Left cardiac atrium (tissue), 4 donors: ENCODE measurements at regions of chr2 and their contacts with region 1.

Region 1: DNA sequence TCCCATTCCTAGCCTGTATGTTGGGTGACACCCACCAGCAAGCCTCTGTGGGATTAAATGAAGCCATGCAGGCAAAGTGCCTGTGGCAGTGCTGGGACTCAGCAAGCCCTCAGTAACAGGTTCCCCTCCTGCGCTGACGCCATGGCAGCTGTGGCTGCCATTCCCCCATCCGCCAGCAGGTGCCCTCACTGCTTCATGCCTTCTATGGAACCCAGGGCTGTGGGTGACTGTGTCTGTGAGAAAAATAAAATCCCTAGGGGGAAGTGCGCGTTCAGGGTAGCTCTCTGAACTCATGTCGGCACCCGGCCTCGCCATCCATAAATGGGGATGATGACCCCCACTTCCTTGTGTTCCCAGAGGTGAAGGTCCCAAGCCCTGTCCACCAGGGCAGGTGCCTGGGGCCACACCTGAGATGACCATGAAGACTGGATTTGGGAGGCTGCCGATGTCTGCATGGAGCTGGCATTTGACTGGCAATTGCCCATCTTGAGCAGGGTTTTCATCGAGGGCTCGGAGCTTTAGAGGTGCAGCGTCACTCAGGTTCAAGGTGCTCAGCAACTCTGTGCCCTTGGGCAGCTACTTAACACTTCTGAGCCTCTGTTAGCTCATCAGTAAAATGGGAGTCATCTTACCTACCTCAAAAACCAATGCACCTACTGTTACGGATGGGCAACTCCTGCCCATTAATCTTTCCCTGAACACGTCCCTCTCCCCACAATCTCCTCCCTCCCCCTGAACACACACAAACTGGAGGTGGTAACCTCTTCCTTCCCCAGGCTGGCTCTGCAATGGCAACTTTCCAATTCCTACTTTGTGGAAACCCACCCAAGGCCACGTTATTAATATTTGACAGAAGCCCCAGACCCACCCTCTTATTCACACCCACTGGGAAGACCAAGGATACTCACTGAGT is 2.9 kb upstream of the MAL start:
- DNase-seq: peak; percentile 57
- ATAC-seq: peak; percentile 66 to 68

Region 2: DNA sequence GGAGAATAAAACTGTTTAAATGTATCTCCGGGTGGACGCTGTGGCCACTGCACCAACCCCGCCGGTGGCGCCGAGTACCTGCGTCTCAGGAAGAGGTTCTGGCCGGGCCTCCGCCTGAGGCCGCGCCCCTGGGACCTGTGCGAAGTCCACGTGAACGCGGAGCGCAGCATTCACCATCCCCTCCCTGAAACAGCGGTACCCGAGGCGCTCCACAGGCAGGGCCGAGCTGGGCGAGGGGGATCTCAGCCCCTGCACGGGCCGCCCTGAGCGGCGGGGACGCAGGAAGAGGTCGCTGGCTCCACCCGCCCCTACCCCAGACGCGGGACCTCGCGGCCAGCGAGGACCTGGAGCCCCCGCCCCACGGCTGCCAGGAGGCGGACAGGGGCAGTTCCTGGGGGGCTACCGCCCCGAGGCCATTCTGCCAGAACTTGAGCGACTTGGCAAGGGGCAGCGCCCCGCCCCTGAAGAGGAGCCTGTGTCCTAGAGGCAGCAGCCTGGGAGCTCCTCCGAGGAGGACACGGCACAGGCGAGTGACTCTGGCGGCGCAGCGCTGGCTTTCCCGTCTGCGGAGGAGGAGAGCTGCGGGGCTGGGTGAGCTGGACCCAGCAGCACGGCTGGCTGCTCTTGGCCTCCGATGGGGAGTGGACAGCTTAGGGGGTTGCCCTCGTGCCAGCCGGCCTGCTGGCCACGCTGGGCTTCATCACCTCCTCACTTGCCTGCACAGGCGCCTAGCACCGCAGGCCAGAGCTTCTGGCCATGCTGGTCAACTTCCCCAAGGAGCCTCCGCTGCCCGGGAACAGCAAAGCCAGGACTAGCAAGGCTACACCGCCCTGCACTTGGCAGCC is 161.0 kb before region 1 on chr2:
- intact Hi-C with region 1: no loop called
- DNase-seq: no peak
- ATAC-seq: no peak

Region 3: DNA sequence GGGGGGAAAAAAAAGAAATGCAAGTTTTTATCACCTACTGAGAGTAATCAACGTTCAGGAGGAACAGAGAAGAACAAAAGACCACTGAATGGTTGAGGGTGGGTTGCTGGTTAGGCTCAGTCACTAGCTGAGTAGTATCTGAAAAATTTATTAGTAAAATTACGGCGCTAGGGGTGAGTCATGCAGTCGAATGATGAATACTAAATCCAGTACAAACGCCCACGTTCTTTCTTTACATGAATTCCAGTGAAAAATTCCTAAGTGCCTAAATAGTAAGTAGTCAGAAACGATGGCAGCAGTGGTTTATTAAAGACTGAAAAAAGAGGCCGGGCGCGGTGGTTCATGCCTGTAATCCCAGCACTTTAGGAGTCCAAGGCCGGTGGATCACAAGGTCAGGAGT is 99.4 kb before region 1 on chr2:
- intact Hi-C with region 1: no loop called
- DNase-seq: no peak
- ATAC-seq: no peak

Region 4: GRCh38 chr2:95076784-95077529 is 54.4 kb after region 1 on chr2:
- intact Hi-C with region 1: loop called (anchors 2 to 10 kb)
- DNase-seq: peak; percentile 72
- ATAC-seq: peak; percentile 72 to 85

Region 5: GRCh38 chr2:95115418-95115817 is 92.9 kb after region 1 on chr2:
- intact Hi-C with region 1: loop called in 1 of 2 experiments (anchors 2 kb)
- DNase-seq: peak; percentile 60
- ATAC-seq: peak; percentile 90 to 92